ENCODE measurements at regions of chr1 and their contacts with region 1.

Region 1: GRCh38 chr1:39189592-39190041 is 14.9 kb upstream of the MACF1 start:
- DNase-seq: no peak
- ATAC-seq: no peak
- H3K4me3 ChIP-seq: no peak overlapping the region
- H3K27ac ChIP-seq: peak overlapping the region; percentile 83 to 94
- H3K4me1 ChIP-seq: peaks cover 92% of the 10 kb centered on the region
- CTCF ChIP-seq: no peak
- EP300 ChIP-seq: no peak
- POLR2A ChIP-seq: no peak
- RAD21 ChIP-seq: no peak

Region 2: DNA sequence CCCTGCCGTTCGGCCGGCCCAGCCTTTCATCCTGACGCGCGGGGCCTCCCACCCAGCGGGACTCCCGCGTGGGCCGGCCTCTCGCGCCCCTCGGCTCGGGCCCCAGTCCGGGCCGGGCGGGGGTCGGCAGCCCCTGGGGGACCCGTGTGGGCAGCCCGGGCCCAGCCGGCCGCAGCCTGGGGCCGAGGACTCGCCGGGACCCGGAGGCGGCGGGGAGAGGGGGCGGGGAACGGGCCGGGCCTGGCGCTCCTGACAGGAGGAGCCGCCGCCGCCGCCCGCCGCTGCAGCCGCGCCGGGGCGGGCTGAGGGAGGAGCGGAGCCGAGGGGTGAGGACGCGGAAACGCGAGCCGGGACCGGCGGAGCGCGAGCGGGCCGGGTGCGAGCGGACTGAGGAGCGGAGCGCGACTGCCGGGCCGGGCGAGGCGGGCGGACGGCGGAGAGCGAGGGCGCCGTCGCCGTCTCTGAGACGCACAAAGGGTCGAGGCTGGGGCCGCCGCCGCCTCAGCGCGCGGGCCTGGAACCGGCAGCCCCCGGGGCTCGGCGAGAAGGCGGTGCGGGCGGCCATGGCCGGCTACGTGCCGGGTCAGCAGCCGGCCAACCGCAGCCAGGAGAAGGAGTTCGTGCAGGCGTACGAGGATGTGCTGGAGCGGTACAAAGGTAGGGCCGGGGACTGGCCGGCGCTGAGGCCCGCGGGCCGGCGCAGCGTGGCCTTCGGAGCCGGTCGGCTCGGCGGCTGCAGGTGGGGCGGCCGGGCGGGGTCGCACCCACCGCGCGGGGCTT is 84.4 kb before region 1 on chr1:
- CTCF ChIA-PET with region 1: interaction called, 40 read pairs
- POLR2A ChIA-PET with region 1: interaction called, 5 read pairs
- DNase-seq: peak in 1 of 2 experiments; percentile 38
- ATAC-seq: peak; percentile 68 to 76
- H3K4me3 ChIP-seq: peak overlapping the region; percentile 81
- H3K27ac ChIP-seq: peak overlapping the region; percentile 84 to 99
- H3K4me1 ChIP-seq: peaks cover 48% of the 10 kb centered on the region
- CTCF ChIP-seq: no peak
- EP300 ChIP-seq: no peak
- POLR2A ChIP-seq: peak; percentile 65
- RAD21 ChIP-seq: no peak

Region 3: GRCh38 chr1:39132505-39133339 is 56.9 kb before region 1 on chr1:
- CTCF ChIA-PET with region 1: interaction called, 68 read pairs
- POLR2A ChIA-PET with region 1: no interaction called
- DNase-seq: peak; percentile 22 to 55
- ATAC-seq: peak; percentile 55 to 80; a peak in 5 of 6 replicates
- H3K4me3 ChIP-seq: no peak overlapping the region
- H3K27ac ChIP-seq: peak overlapping the region; percentile 65 to 82
- H3K4me1 ChIP-seq: peaks cover 64% of the 10 kb centered on the region
- CTCF ChIP-seq: no peak
- EP300 ChIP-seq: no peak
- POLR2A ChIP-seq: no peak
- RAD21 ChIP-seq: no peak

Region 4: GRCh38 chr1:39142401-39143151 is 47.0 kb before region 1 on chr1:
- CTCF ChIA-PET with region 1: interaction called, 37 read pairs
- POLR2A ChIA-PET with region 1: no interaction called
- DNase-seq: no peak
- ATAC-seq: no peak; a peak in 1 of 6 replicates
- H3K4me3 ChIP-seq: no peak overlapping the region
- H3K27ac ChIP-seq: peak overlapping the region in 1 of 2 experiments; percentile 5; a peak in 1 of 6 replicates
- H3K4me1 ChIP-seq: peaks cover 24% of the 10 kb centered on the region
- CTCF ChIP-seq: no peak
- EP300 ChIP-seq: no peak
- POLR2A ChIP-seq: no peak
- RAD21 ChIP-seq: no peak

Region 5: GRCh38 chr1:39170731-39171667 is 18.6 kb before region 1 on chr1:
- CTCF ChIA-PET with region 1: interaction called, 35 read pairs
- POLR2A ChIA-PET with region 1: interaction called, 6 read pairs
- DNase-seq: no peak
- ATAC-seq: peak in 1 of 2 experiments; percentile 32; a peak in 3 of 6 replicates
- H3K4me3 ChIP-seq: no peak overlapping the region
- H3K27ac ChIP-seq: peak overlapping the region; percentile 41 to 91; a peak in 4 of 6 replicates
- H3K4me1 ChIP-seq: peaks cover 75% of the 10 kb centered on the region
- CTCF ChIP-seq: no peak
- EP300 ChIP-seq: no peak
- POLR2A ChIP-seq: no peak
- RAD21 ChIP-seq: no peak